HCT116 (cell line): ENCODE measurements at regions of chr18 and their contacts with region 1.

Region 1: DNA sequence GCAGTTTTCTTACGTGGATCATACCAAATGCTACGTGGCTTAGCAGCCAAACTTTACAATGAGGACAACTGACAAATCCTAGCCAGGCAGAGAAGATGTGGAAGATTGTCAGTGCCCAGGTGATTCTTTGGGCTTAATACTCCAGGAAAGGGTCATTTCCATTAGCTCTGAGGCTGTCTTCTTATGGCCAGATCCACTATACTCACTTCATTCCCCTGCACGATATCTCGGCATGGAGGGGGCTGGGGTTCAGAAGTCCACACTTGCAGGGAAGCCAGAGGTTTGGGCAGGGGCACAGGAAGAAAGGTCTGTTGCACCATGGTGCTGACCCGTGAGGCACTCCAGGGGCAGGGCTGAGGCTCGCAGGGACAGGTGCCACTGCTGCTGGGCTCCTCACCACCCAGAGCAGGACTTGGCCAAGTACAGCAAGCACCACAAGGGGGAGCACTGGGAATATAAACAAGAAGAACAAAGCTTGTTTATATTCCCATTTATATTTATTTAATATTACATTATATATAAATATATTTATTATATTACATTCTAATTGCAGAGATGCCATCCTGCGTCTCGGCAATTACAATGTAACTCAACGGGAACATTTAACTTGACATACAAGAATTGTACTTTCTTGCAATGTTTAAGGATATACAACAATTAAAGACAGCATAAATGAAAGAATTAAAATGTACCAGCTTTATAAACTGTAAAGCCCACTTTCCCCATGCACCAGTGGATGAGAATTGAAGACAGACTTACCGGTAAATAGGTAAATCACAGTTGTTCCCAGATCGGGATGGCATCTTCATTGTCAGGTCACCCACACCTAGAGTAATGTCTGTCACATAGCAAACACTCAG is 27.2 kb downstream of the CLUL1 start:
- DNase-seq: peak; percentile 69
- ATAC-seq: peak; percentile 100
- H3K4me3 ChIP-seq: no peak overlapping the region
- H3K27ac ChIP-seq: no peak overlapping the region
- H3K4me1 ChIP-seq: peaks cover 0 to 7% of the 10 kb centered on the region in 2 experiments; a peak in 1 of 4 replicates
- H3K27me3 ChIP-seq: no peaks in the 10 kb centered on the region
- CTCF ChIP-seq: peak; percentile 55 to 81 (median 70)
- POLR2A ChIP-seq: no peak
- RAD21 ChIP-seq: peak; percentile 74

Region 2: DNA sequence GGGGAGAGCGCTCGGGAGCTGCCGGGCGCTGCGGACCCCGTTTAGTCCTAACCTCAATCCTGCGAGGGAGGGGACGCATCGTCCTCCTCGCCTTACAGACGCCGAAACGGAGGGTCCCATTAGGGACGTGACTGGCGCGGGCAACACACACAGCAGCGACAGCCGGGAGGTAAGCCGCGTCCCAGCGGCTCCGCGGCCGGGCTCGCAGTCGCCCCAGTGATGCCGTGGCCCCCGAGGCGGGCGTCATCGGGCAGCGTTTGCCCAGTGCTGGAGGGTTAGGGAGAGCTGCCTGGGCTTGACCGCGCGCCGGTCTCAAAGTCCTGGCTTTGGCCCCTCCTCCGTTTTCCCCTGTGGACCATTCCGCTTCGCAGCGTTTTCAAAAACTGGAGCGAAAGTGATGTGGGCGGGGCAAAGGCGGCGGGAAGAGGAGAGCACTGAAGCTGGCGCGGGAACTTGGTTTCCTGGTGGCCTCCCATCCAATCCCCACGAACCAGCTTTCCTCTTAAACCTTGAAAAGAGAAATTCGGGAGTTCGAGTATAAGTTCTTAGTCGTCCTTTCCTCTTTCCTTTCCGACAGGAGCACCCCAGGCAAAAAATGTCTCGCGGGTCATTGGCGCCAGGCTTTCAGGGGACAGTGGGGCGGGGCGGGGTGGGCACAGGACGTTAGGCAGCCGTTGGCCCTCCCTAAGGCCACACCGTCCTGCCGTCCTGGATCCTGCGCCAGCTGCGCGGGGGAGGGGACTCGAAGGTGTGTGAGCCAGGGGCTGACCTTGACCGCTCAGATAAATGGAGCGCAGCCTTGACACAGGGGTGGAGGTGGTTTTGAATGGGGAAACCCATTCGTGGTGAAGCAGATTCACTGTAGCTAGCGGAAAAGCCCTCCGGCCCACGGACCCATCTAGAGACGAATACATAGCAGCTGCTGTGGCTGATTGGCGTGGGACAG is 34.3 kb after region 1 on chr18:
- CTCF ChIA-PET with region 1: interaction called, 11 read pairs
- POLR2A ChIA-PET with region 1: interaction called, 4 read pairs
- RAD21 ChIA-PET with region 1: interaction called in 1 of 2 experiments, 3 read pairs
- intact Hi-C with region 1: no loop called
- DNase-seq: peak; percentile 82
- ATAC-seq: peak; percentile 83
- H3K4me3 ChIP-seq: peak overlapping the region; percentile 85 to 96
- H3K27ac ChIP-seq: peak overlapping the region; percentile 100
- H3K4me1 ChIP-seq: peaks cover 9 to 22% of the 10 kb centered on the region in 2 experiments; a peak in 3 of 4 replicates
- H3K27me3 ChIP-seq: no peaks in the 10 kb centered on the region
- CTCF ChIP-seq: no peak
- POLR2A ChIP-seq: peak; percentile 49
- RAD21 ChIP-seq: no peak

Region 3: GRCh38 chr18:686339-687111 is 62.5 kb after region 1 on chr18:
- CTCF ChIA-PET with region 1: no interaction called
- POLR2A ChIA-PET with region 1: no interaction called
- RAD21 ChIA-PET with region 1: no interaction called
- intact Hi-C with region 1: no loop called
- DNase-seq: no peak
- ATAC-seq: peak; percentile 49; the same call in 1 of the 2 replicates
- H3K4me3 ChIP-seq: no peak overlapping the region
- H3K27ac ChIP-seq: no peak overlapping the region
- H3K4me1 ChIP-seq: no peaks in the 10 kb centered on the region
- H3K27me3 ChIP-seq: no peaks in the 10 kb centered on the region
- CTCF ChIP-seq: no peak
- POLR2A ChIP-seq: no peak
- RAD21 ChIP-seq: no peak

Region 4: GRCh38 chr18:839224-840022 is 215.4 kb after region 1 on chr18:
- CTCF ChIA-PET with region 1: interaction called, 72 read pairs
- POLR2A ChIA-PET with region 1: no interaction called
- RAD21 ChIA-PET with region 1: interaction called, 8 read pairs
- intact Hi-C with region 1: loop called (anchors 1 kb)
- DNase-seq: peak; percentile 68
- ATAC-seq: peak; percentile 98
- H3K4me3 ChIP-seq: no peak overlapping the region
- H3K27ac ChIP-seq: no peak overlapping the region
- H3K4me1 ChIP-seq: peaks cover 7 to 34% of the 10 kb centered on the region in 2 experiments
- H3K27me3 ChIP-seq: no peaks in the 10 kb centered on the region
- CTCF ChIP-seq: peak; percentile 78 to 96 (median 93); a peak in 5 of 6 replicates
- POLR2A ChIP-seq: no peak
- RAD21 ChIP-seq: peak; percentile 73